Endothelial cell of umbilical vein (primary cell): ENCODE measurements at regions of chr14 and their contacts with region 1.

Region 1: GRCh38 chr14:72665259-72665658 is 228.6 kb downstream of the DPF3 start:
- DNase-seq: peak; percentile 97
- H3K4me3 ChIP-seq: peak overlapping the region in 1 of 3 experiments; percentile 52
- H3K27ac ChIP-seq: peak overlapping the region; percentile 97
- H3K4me1 ChIP-seq: peaks cover 46% of the 10 kb centered on the region
- H3K27me3 ChIP-seq: no peaks in the 10 kb centered on the region
- CTCF ChIP-seq: no peak
- POLR2A ChIP-seq: peak; percentile 15

Region 2: GRCh38 chr14:71956920-71957563 is 708.2 kb before region 1 on chr14:
- CTCF ChIA-PET with region 1: no interaction called
- POLR2A ChIA-PET with region 1: no interaction called
- dilution Hi-C with region 1: no loop called
- intact Hi-C with region 1: no loop called
- DNase-seq: no peak
- H3K4me3 ChIP-seq: no peak overlapping the region
- H3K27ac ChIP-seq: no peak overlapping the region
- H3K4me1 ChIP-seq: no peaks in the 10 kb centered on the region
- H3K27me3 ChIP-seq: no peaks in the 10 kb centered on the region
- CTCF ChIP-seq: no peak
- POLR2A ChIP-seq: no peak

Region 3: DNA sequence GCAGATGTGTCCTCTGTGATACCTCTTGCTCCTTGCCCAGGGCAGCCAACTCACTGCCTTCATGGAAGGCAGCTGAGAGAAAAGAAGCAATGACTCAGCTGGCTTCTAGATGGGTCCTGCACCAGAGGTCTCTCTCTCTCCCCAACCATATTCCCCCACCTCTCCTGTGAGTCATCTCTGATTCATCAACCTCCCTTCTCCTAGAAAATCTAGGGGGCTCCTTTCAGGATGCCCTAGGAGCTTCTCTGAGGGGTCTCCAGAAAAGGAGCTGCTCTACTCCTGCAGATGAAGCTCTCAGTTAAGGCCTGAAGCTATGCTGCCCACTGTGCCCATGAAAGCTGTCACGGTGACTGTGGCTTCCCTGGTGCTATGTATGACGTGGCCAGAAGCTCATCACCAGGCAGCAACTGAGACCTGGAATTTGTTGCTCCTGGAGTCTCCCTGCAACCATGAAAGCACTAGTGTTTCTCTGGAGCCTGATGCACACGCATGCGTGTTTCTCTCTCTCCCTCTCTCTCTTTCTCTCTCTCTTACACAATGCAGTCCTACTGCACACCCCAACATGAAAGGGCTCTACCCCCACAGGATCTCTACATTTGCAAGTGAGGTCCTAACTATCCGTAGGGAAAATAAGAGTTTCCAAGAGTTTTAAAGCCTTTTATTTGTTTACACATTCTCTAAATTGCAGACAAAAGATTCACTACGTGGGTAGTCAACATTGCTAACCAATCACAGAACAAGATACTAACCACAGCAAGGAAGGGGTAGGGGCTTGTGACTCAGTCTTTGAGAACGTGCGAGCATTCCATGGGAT is 56.7 kb before region 1 on chr14:
- CTCF ChIA-PET with region 1: no interaction called
- POLR2A ChIA-PET with region 1: no interaction called
- dilution Hi-C with region 1: no loop called
- intact Hi-C with region 1: loop called (anchors 1 kb)
- DNase-seq: peak; percentile 64
- H3K4me3 ChIP-seq: no peak overlapping the region
- H3K27ac ChIP-seq: peak overlapping the region; percentile 19
- H3K4me1 ChIP-seq: peaks cover 15% of the 10 kb centered on the region
- H3K27me3 ChIP-seq: no peaks in the 10 kb centered on the region
- CTCF ChIP-seq: no peak
- POLR2A ChIP-seq: no peak

Region 4: DNA sequence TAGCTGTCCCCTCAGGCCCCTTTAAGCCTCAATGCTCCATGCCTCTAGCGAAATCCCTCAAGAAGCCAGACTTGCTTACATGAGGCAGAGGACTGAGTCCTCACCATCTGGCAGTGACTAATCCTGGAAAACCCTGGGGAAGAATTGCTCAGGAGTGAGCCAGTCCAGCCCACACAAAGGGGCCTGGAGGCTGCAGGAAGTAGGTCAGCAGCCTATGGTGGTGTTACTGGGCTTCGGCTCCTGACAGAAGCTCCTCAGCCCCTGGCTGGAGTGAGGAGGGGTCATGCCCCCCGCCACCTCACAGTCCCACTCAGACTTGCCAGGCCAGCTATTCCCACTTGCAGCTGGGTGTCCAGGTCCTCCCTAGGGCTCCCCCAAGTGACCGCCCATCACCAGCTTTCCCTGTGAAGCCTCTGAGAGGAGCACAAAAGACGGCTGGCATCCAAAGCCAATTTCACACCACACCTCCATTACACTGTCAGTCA is 21.9 kb before region 1 on chr14:
- CTCF ChIA-PET with region 1: interaction called, 6 read pairs
- POLR2A ChIA-PET with region 1: no interaction called
- dilution Hi-C with region 1: no loop called
- intact Hi-C with region 1: loop called (anchors 1 kb)
- DNase-seq: peak; percentile 96
- H3K4me3 ChIP-seq: no peak overlapping the region
- H3K27ac ChIP-seq: peak overlapping the region; percentile 96
- H3K4me1 ChIP-seq: peaks cover 31% of the 10 kb centered on the region
- H3K27me3 ChIP-seq: no peaks in the 10 kb centered on the region
- CTCF ChIP-seq: peak in 1 of 2 donors; percentile 8
- POLR2A ChIP-seq: peak; percentile 47

Region 5: GRCh38 chr14:72679536-72680151 is 14.4 kb after region 1 on chr14:
- CTCF ChIA-PET with region 1: interaction called, 7 read pairs
- POLR2A ChIA-PET with region 1: interaction called, 12 read pairs
- dilution Hi-C with region 1: no loop called
- intact Hi-C with region 1: loop called (anchors 1 kb)
- DNase-seq: peak; percentile 15
- H3K4me3 ChIP-seq: no peak overlapping the region
- H3K27ac ChIP-seq: peak overlapping the region; percentile 94
- H3K4me1 ChIP-seq: peaks cover 27% of the 10 kb centered on the region
- H3K27me3 ChIP-seq: no peaks in the 10 kb centered on the region
- CTCF ChIP-seq: no peak
- POLR2A ChIP-seq: no peak

Region 6: DNA sequence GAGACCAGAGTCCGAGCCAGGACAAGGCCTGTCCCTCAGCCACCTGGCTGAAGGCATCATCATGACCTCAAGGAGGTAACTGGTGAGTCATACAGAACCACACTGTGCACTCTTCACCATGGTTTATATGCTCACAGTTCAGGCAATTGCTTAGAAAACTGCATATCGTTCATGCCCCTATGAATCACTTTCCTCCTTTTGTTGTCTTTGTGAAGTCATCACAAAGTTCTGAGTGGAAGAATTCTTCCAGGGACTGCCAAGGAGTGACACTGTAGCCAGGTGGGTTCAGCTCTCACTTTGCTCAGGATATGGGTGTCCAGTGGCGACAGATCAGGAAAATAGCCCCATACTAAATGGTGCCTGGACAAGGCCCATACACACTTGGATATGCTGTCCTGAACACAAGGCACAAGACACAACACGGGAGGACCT is 136.1 kb after region 1 on chr14:
- CTCF ChIA-PET with region 1: no interaction called
- POLR2A ChIA-PET with region 1: no interaction called
- dilution Hi-C with region 1: no loop called
- intact Hi-C with region 1: loop called (anchors 1 kb)
- DNase-seq: peak; percentile 93
- H3K4me3 ChIP-seq: no peak overlapping the region
- H3K27ac ChIP-seq: peak overlapping the region; percentile 95
- H3K4me1 ChIP-seq: peaks cover 22% of the 10 kb centered on the region
- H3K27me3 ChIP-seq: no peaks in the 10 kb centered on the region
- CTCF ChIP-seq: no peak
- POLR2A ChIP-seq: no peak

Region 7: DNA sequence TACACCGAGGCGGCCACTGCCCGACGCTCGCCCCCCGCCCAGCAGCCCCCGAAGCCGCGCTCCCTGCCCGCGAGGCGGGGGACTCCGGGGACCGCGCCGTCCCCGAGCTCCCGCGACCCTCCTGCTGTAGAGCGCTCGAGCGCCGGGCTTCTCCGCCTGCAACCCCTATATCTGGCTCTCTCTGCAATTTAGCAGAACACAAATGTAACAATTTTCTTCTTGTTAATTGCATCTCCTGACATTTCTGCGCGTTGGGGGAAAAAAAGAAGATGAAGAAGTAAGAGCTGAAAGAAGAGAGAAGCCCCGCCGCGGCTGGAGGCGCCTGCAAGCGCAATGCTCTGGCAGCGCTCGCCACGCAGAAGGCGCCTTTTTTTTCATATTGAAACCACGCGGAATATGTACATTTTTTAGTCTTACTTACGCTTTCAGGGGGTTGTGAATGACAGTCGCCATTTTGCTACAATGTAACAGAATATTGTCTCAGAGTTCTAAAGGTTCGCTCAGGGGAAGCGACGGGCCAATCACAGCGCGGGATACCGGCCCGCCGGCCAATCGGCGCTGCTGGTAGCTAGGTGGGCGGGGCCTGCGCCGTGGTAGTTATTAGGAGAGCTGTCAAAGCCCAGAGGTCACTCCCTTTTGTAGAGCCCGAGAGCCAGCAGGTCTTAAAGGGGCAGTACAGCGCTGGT is 228.5 kb after region 1 on chr14 and contains the start of gene DPF3:
- CTCF ChIA-PET with region 1: interaction called, 4 read pairs
- POLR2A ChIA-PET with region 1: no interaction called
- dilution Hi-C with region 1: no loop called
- intact Hi-C with region 1: loop called (anchors 1 kb)
- DNase-seq: peak; percentile 97
- H3K4me3 ChIP-seq: peak within 1 kb of the TSS; percentile 72 to 99 (median 92)
- H3K27ac ChIP-seq: peak within 1 kb of the TSS; percentile 66
- H3K4me1 ChIP-seq: peaks cover 27% of the 10 kb centered on the region
- H3K27me3 ChIP-seq: no peaks in the 10 kb centered on the region
- CTCF ChIP-seq: no peak
- POLR2A ChIP-seq: peak; percentile 44
- total RNA-seq, gene DPF3: 3.5 and 8.1 TPM in 2 replicates